ENCODE measurements at regions of chr5 and their contacts with region 1.

Region 1: GRCh38 chr5:112757468-112758208 is 20.0 kb downstream of the APC start:
- DNase-seq: no peak
- ATAC-seq: peak; percentile 70
- H3K4me3 Mint-ChIP-seq: no peak overlapping the region
- H3K27ac Mint-ChIP-seq: no peak overlapping the region
- H3K4me1 Mint-ChIP-seq: peaks cover 2% of the 10 kb centered on the region
- H3K27me3 Mint-ChIP-seq: no peaks in the 10 kb centered on the region
- CTCF ChIP-seq: peak; percentile 87

Region 2: DNA sequence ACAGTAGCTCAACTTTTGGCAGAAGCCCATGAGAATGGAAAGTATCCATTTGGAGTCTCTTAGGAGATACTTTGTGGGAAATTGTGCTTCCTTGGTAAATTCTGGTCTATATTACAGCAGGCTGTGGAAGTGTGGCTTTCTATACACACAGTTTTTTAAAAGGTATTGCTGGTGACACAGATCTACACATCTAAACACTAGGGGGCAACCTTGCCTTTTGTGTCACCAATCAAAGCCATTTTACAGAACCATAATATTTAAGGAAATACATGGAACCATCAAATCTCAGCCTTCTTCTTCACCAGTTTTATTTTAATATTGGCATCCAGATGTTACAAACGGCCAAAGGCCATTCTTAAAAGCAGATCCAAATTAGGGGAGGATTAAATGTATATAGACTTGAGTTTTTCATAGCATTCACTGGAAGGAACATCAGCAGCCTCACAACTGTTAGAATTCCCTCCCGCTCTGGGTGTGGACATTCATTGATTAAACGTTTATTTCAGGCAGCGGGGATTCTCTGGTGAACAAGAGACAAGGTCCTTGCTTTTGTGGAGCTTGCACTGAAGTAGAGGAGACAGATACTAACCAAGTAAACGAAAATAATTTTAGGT is 206.1 kb before region 1 on chr5:
- CTCF ChIA-PET with region 1: interaction called, 100 read pairs
- POLR2A ChIA-PET with region 1: no interaction called
- intact Hi-C with region 1: loop called (anchors 1 kb)
- DNase-seq: peak; percentile 35
- ATAC-seq: peak; percentile 49
- H3K4me3 Mint-ChIP-seq: no peak overlapping the region
- H3K27ac Mint-ChIP-seq: no peak overlapping the region
- H3K4me1 Mint-ChIP-seq: peaks cover 2% of the 10 kb centered on the region
- H3K27me3 Mint-ChIP-seq: peaks cover 4% of the 10 kb centered on the region
- CTCF ChIP-seq: peak; percentile 83

Region 3: GRCh38 chr5:112691758-112692157 is 65.9 kb before region 1 on chr5:
- CTCF ChIA-PET with region 1: interaction called, 59 read pairs
- POLR2A ChIA-PET with region 1: interaction called, 4 read pairs
- intact Hi-C with region 1: no loop called
- DNase-seq: peak; percentile 53
- ATAC-seq: peak; percentile 71
- H3K4me3 Mint-ChIP-seq: no peak overlapping the region
- H3K27ac Mint-ChIP-seq: no peak overlapping the region
- H3K4me1 Mint-ChIP-seq: no peaks in the 10 kb centered on the region
- H3K27me3 Mint-ChIP-seq: peaks cover 33% of the 10 kb centered on the region
- CTCF ChIP-seq: peak; percentile 38

Region 4: DNA sequence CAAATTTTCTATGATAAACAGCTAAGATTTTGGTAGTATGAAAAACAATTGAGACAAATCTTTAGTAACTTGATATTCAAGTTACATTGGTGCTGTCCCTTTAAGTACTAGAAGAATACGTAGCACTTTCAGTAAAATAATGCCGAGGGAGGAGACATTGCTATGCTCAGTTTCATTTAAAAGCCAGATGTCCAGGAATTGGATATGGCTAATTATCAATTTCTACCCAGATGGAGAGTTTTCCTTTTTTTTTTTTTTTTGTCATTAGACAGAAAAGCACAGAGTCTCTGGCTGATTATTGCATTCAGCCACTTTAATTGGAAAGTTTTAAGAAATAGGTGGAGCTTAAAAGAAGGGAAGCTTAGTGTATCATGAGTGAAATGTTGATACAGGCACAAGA is 60.3 kb before region 1 on chr5:
- CTCF ChIA-PET with region 1: interaction called, 59 read pairs
- POLR2A ChIA-PET with region 1: no interaction called
- intact Hi-C with region 1: no loop called
- DNase-seq: no peak
- ATAC-seq: no peak
- H3K4me3 Mint-ChIP-seq: no peak overlapping the region
- H3K27ac Mint-ChIP-seq: no peak overlapping the region
- H3K4me1 Mint-ChIP-seq: no peaks in the 10 kb centered on the region
- H3K27me3 Mint-ChIP-seq: peaks cover 12% of the 10 kb centered on the region
- CTCF ChIP-seq: no peak

Region 5: GRCh38 chr5:112707187-112708102 is 50.2 kb before region 1 on chr5:
- CTCF ChIA-PET with region 1: interaction called, 13 read pairs
- POLR2A ChIA-PET with region 1: interaction called, 3 read pairs
- intact Hi-C with region 1: no loop called
- DNase-seq: peak; percentile 97
- ATAC-seq: peak; percentile 95
- H3K4me3 Mint-ChIP-seq: peak overlapping the region; percentile 92
- H3K27ac Mint-ChIP-seq: peak overlapping the region; percentile 86
- H3K4me1 Mint-ChIP-seq: peaks cover 49% of the 10 kb centered on the region
- H3K27me3 Mint-ChIP-seq: no peaks in the 10 kb centered on the region
- CTCF ChIP-seq: no peak

Region 6: DNA sequence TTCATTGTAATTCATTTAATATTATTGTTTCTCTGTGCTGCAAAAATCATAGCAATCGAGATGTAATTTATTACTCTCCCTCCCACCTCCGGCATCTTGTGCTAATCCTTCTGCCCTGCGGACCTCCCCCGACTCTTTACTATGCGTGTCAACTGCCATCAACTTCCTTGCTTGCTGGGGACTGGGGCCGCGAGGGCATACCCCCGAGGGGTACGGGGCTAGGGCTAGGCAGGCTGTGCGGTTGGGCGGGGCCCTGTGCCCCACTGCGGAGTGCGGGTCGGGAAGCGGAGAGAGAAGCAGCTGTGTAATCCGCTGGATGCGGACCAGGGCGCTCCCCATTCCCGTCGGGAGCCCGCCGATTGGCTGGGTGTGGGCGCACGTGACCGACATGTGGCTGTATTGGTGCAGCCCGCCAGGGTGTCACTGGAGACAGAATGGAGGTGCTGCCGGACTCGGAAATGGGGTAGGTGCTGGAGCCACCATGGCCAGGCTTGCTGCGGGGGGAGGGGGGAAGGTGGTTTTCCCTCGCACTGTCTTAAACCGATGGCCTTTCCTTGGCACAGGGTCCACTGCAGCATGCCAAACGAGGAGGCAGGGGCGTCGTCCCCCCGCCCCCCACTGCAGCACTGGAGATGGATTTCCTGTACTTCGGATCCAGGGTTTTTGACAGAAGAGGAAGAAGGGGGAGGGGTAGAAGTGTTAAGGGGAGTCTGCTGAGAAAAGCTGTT is 20.0 kb before region 1 on chr5 and contains the start of gene APC:
- CTCF ChIA-PET with region 1: interaction called, 13 read pairs
- POLR2A ChIA-PET with region 1: no interaction called
- intact Hi-C with region 1: no loop called
- DNase-seq: peak; percentile 92
- ATAC-seq: peak; percentile 98
- H3K4me3 Mint-ChIP-seq: peak within 1 kb of the TSS; percentile 97
- H3K27ac Mint-ChIP-seq: peak within 1 kb of the TSS; percentile 84
- H3K4me1 Mint-ChIP-seq: peaks cover 18% of the 10 kb centered on the region
- H3K27me3 Mint-ChIP-seq: no peaks in the 10 kb centered on the region
- CTCF ChIP-seq: peak; percentile 14
- total RNA-seq, gene APC: 18.7 to 19.0 TPM

Region 7: DNA sequence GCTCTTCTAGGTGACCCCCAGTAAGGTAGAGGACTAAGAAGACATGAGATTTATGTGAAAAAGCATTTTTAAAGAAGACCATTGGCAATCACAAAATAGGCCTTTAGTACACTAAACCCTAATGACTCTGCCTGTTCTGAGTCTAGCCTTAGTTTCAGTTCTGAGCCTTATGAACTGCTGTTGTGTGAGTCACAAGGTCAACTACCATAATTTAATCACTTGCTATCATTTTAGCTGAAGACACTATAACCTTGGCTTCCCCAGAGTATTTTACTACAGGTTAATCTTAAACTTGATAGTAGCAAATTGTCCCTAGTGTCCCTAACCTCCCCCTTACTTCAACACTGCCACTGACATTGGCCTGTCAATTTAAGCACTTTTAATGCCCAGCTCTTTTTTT is 14.5 kb after region 1 on chr5:
- CTCF ChIA-PET with region 1: interaction called, 14 read pairs
- POLR2A ChIA-PET with region 1: no interaction called
- intact Hi-C with region 1: no loop called
- DNase-seq: no peak
- ATAC-seq: peak; percentile 58
- H3K4me3 Mint-ChIP-seq: no peak overlapping the region
- H3K27ac Mint-ChIP-seq: no peak overlapping the region
- H3K4me1 Mint-ChIP-seq: peaks cover 3% of the 10 kb centered on the region
- H3K27me3 Mint-ChIP-seq: no peaks in the 10 kb centered on the region
- CTCF ChIP-seq: no peak

Region 8: DNA sequence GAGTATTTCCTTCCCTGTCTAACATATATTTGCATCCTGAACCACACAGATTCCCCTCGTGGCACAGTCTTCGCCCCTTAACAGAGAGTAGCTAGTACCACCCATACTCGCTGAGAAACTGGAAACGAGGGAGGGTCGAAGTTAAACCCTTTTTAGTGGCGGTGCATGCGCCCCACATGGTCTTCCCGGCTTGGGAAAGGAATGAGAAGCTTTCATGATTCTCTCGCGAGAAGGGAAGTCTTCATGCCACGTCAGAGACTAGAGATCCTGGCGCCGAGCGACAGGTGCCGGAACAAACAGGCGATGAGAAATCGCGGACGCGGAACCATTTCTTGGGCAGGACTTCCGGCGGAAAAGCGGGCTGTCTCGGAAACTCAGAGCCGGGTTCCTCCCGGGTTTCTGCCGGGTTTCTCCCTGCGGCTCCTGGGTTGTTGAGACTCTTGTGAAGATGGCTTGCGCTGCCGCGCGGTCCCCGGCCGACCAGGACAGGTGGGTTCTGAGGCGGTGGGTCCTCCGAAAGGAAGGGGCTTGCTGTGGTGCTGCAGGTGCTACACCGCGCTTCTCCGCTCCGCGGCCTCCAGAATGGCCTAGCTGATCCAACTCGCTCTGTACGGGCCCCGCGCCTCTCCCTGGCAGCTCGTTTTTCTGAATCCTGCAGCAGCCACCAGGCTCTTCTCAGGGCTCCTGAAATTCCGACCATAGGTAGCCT is 103.4 kb after region 1 on chr5 and contains the start of gene SRP19:
- CTCF ChIA-PET with region 1: no interaction called
- POLR2A ChIA-PET with region 1: no interaction called
- intact Hi-C with region 1: no loop called
- DNase-seq: peak; percentile 94
- ATAC-seq: peak; percentile 94
- H3K4me3 Mint-ChIP-seq: peak within 1 kb of the TSS; percentile 96
- H3K27ac Mint-ChIP-seq: peak within 1 kb of the TSS; percentile 98
- H3K4me1 Mint-ChIP-seq: peaks cover 25% of the 10 kb centered on the region
- H3K27me3 Mint-ChIP-seq: peaks cover 9% of the 10 kb centered on the region
- CTCF ChIP-seq: no peak
- total RNA-seq, gene SRP19: 45.6 to 47.0 TPM

Region 9: DNA sequence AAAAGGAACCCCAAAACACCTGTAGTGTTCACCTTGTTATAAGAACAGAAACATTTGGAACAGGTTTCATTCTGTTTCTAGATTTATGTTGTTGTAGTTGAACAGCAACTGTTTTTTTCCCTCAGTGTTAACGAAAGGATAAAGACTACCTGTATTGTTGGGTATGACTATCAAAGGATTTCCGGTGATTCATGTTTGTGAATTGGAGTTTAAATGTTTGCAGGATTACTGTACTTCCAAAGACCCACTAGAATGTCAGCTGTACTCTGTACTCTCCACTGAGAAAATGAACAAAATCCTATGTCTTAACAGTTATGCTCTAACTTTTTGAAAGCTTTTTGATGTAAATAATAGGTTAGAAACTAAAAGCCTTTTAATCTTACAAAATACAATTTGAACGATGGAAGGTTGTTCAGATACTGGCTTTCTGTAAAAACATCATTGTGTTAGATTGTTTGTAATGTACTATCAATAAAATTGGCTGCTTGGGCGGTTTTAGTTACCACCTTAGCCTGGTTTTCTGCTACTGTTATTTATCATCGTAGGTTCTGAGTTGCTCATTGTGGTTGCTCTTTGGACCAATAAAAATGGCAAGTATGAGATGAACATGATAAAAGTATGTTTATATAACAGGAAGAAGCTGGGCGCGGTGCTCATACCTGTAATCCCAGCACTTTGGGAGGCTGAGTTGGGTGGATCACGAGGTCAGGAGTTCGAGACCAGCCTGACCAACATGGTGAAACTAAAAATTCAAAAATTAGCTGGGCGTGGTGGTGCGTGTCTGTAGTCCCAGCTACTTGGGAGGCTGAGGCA is 263.0 kb after region 1 on chr5:
- CTCF ChIA-PET with region 1: no interaction called
- POLR2A ChIA-PET with region 1: no interaction called
- intact Hi-C with region 1: no loop called
- DNase-seq: peak; percentile 26
- ATAC-seq: peak; percentile 24
- H3K4me3 Mint-ChIP-seq: no peak overlapping the region
- H3K27ac Mint-ChIP-seq: peak overlapping the region; percentile 38
- H3K4me1 Mint-ChIP-seq: peaks cover 66% of the 10 kb centered on the region
- H3K27me3 Mint-ChIP-seq: no peaks in the 10 kb centered on the region
- CTCF ChIP-seq: no peak

Measured in activated CD8-positive, alpha-beta T cell treated with anti-CD3 and anti-CD28 coated beads for 36 hours (primary cell).